ENCODE measurements at regions of chr19 and their contacts with region 1.

Region 1: GRCh38 chr19:17370026-17370587 is 7.0 kb downstream of the PLVAP start:
- DNase-seq: peak; percentile 85
- H3K4me3 ChIP-seq: peak overlapping the region; percentile 29
- H3K27ac ChIP-seq: peak overlapping the region; percentile 92
- H3K4me1 ChIP-seq: peaks cover 58% of the 10 kb centered on the region
- CTCF ChIP-seq: no peak

Region 2: DNA sequence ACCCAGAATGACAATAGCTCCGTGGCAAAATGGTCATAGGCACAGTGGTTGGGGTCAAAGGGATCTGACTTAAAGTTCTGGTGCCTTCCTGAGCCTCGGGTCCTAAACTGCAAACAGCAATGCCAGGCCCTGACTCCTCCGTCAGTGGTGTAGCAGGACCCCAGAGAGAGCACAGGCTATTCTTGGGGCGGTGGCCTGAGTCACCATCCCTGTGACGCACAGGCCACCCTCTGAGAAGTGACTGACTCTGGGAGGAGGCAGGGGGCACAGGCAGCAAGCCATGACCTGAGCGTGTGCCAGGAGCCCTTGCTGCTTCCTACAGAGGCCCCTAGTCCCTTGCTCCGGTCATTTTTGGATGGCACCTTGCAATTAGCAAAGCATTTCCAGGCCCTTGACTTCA is 11.7 kb before region 1 on chr19:
- CTCF ChIA-PET with region 1: no interaction called
- POLR2A ChIA-PET with region 1: interaction called, 12 read pairs
- intact Hi-C with region 1: no loop called
- DNase-seq: no peak
- H3K4me3 ChIP-seq: no peak overlapping the region
- H3K27ac ChIP-seq: no peak overlapping the region
- H3K4me1 ChIP-seq: no peaks in the 10 kb centered on the region
- CTCF ChIP-seq: no peak

Region 3: DNA sequence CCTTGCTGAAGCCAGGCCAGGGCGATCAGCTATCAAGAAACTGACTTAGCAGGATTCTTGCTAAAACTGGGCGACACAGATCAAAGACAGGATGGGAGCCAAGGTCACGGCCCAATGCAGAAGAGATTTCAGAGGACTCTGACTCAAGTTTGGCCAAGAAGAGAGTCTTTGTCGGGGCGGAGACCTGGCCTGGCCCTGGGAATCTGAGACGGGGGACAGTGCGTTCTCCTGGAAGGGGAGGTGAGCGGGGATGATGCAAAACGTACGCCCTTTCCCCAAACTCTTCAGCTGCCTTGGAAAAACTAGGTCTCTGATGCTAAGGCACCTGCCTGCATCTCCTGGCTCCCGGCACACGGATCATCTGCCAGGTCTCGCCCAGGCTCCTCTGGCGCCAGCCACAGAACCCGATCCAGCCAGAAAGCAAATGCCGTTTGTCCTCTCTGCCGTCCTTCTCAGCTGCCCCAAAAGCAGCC is 59.6 kb after region 1 on chr19:
- CTCF ChIA-PET with region 1: no interaction called
- POLR2A ChIA-PET with region 1: no interaction called
- intact Hi-C with region 1: no loop called
- DNase-seq: no peak
- H3K4me3 ChIP-seq: no peak overlapping the region
- H3K27ac ChIP-seq: no peak overlapping the region
- H3K4me1 ChIP-seq: peaks cover 18% of the 10 kb centered on the region
- CTCF ChIP-seq: no peak